ENCODE measurements at regions of chr2 and their contacts with region 1.

Region 1: DNA sequence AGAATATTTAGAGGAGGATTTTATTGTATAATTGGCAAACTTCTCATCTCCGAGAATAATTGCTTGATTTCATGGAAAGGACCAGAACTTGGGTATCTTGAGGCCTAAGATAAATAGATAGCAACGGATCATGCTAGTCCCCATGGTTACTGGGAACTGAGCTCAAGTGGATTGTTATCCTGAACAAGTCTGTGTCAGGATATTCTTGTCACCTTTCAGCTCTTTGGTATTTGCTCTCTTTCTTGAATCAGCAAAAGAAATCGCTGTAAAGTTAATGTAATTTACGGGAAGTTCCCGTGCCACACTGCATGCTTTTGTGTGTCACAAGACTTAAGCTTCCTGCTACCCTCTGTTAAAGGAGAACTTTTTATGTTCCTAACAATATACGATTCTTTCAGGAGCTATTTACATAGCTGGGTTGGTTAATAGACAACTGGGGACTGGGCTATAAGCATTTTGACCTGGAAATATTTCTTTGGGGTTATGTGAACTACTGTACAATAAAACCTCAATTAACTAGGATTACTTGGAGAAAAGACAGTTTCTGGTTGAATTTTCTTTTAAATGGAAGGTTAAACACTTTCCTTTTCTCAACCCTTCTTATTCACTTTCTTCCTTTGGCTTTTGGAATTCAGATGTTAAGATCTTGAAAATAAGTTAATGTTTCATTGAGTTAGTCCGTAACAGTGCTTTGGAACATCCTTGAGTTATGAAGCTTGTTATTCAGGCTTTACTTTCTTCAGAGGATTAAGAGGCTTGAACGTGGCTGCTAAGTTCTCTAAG is 151.2 kb downstream of the FMNL2 start:
- DNase-seq: no peak
- ATAC-seq: peak; percentile 37 to 53
- H3K4me3 ChIP-seq: no peak overlapping the region
- H3K27ac ChIP-seq: no peak overlapping the region
- H3K4me1 ChIP-seq: peaks cover 8% of the 10 kb centered on the region
- H3K27me3 ChIP-seq: no peaks in the 10 kb centered on the region

Region 2: DNA sequence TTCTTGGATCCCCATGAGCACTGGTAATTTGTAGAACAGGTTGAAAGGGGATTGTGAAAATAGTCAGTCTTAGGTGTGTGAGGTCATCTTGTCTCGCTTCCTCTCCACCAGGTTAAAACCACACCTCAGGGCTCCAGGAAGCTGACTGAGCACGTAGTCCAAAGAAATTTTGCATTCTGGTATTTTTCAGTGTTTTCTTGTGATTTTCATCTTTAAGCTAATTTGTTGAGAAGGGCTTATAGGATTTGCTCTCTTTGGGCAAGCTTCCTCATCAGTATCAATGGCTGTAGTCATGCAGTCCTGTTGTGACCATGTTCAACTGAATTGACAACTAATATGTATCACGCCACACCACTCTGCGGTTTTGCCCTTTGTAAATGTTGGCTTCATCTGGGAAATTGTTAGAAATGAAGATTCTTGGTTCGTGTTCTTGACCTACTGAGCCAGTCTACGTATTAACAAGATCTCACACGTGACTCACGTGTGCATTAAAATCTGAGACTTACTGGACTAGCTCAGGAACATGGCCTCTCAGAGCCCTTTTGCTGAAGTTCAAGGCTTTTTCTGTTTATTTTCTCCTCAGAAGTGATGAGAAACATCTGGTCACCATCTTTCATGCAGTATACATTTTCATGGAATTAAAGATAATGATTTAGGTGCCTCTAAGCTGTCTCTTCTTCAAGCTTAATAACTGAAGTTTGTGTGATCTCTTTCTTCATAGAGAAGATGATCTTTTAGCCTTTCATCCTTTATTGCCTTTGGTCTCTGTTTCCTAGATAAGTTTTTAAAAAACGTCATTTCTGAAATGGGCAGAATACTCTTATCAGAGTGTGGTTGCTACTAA is 118.4 kb before region 1 on chr2:
- intact Hi-C with region 1: loop called in 1 of 4 experiments (anchors 10 kb)
- DNase-seq: no peak
- ATAC-seq: no peak
- H3K4me3 ChIP-seq: no peak overlapping the region
- H3K27ac ChIP-seq: no peak overlapping the region
- H3K4me1 ChIP-seq: peaks cover under 1% of the 10 kb centered on the region
- H3K27me3 ChIP-seq: no peaks in the 10 kb centered on the region

Region 3: GRCh38 chr2:152432206-152432653 is 53.9 kb before region 1 on chr2:
- intact Hi-C with region 1: loop called in 1 of 4 experiments (anchors 10 kb)
- DNase-seq: peak in 2 of 3 donors; percentile 44 to 46
- ATAC-seq: peak; percentile 79 to 97
- H3K4me3 ChIP-seq: no peak overlapping the region
- H3K27ac ChIP-seq: peak overlapping the region; percentile 35
- H3K4me1 ChIP-seq: peaks cover 11% of the 10 kb centered on the region
- H3K27me3 ChIP-seq: no peaks in the 10 kb centered on the region

Measured in right cardiac atrium (tissue), 5 donors.